HepG2 (cell line): ENCODE measurements at regions of chr7 and their contacts with region 1.

Region 1: DNA sequence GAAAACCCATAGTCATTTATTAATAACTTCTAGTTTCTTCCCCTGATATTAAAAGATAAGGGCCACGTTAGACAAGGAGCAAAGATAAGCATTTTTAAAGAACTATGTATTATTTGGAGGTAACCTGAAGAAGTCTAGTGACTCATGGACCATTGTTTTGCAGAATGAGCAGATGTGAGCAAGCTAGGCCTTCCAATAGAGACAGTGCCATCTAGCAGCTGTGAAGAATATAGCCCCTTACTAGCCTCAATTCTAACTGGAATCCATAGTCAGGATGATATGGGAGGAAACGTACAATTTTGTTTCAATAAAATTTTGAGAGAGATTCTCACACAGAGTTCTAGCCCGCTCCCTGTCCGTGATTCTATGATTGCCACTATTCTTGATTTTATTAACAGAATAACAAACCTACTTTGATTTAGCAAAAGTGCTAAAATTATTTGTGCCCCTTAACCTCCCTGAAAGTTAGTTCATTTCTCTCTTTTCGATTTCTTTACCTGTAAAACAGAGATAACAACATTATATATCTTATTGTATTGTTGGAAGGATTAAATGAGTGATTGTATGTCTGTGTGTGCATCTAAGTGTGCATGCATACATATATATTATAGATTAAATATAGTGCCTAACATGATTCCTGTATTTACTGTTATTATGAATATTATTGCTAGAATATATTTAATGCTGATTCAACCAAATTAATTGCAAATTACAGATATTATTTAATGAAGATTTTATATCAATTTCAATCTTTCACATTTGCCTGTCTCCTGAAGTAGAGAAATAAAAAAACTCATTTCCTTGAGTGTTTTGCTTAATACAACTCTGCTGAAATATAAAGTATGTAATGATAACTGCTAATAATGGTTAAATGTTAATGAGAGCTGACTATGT is 22.7 kb downstream of the FAM237B start:
- DNase-seq: peak; percentile 54
- ATAC-seq: peak; percentile 99
- H3K4me3 ChIP-seq: no peak overlapping the region
- H3K27ac ChIP-seq: no peak overlapping the region
- H3K4me1 ChIP-seq: no peaks in the 10 kb centered on the region
- H3K27me3 ChIP-seq: no peaks in the 10 kb centered on the region
- CTCF ChIP-seq: peak; percentile 83
- EP300 ChIP-seq: no peak
- POLR2A ChIP-seq: no peak
- RAD21 ChIP-seq: peak; percentile 48; the same call in 1 of the 2 replicates

Region 2: DNA sequence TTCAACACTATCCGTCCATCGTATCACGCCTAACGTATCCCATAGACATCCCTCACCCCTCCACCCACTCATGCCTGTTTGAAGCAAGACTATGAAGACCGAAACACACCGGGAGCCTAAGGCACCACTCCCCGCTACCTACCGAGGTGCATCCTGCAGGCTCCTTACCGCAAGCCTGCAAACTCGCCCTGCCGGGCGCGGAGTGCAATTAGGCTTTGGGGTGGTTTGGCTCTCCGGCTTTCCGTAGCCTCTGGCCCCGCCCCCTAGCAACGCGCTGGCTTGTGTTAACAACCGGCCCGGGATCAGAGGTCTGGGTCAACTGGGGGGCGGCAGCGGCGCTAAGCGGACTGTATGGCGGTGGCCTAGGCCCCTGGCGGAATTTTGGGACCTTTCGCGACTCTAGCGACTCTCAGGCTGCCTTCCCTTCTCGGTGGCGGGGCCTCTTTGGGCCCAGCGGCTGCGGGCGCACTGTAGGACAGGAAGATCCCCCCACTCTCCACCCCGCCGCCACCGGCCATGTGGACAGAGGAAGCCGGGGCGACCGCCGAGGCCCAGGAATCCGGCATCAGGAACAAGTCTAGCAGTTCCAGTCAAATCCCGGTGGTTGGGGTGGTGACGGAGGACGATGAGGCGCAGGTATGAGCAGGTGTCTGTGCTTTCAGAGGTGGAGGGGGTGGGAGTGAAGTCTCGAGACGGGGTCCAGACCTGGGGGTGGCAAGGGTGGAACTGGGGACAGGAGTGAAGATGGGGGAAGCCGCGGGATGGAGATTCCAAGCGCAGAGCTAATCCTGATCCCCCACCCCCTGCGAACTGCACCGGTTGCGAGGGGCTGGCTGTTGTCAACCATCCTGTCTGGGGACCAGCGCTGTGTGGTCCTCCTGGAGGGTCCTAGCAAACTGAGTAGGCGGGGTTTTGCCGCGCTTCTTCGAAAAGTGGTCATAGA is 53.2 kb before region 1 on chr7 and contains the start of gene CFAP69:
- CTCF ChIA-PET with region 1: no interaction called
- POLR2A ChIA-PET with region 1: no interaction called
- in situ Hi-C with region 1: no loop called
- intact Hi-C with region 1: loop called (anchors 5 kb)
- DNase-seq: peak; percentile 78
- ATAC-seq: peak; percentile 90
- H3K4me3 ChIP-seq: peak within 1 kb of the TSS; percentile 61 to 91 (median 76)
- H3K27ac ChIP-seq: peak within 1 kb of the TSS; percentile 51
- H3K4me1 ChIP-seq: peaks cover 29% of the 10 kb centered on the region
- H3K27me3 ChIP-seq: no peaks in the 10 kb centered on the region
- CTCF ChIP-seq: peak; percentile 53; the same call in 1 of the 2 replicates
- EP300 ChIP-seq: peak; percentile 20 to 38; a peak in 2 of 4 replicates
- POLR2A ChIP-seq: peak; percentile 33 to 82; a peak in 2 of 4 replicates
- RAD21 ChIP-seq: peak; percentile 39; the same call in 1 of the 2 replicates
- total RNA-seq, gene CFAP69: 2.7 and 4.0 TPM in 2 replicates

Region 3: GRCh38 chr7:90262438-90262837 is 36.0 kb before region 1 on chr7:
- CTCF ChIA-PET with region 1: no interaction called
- POLR2A ChIA-PET with region 1: no interaction called
- in situ Hi-C with region 1: no loop called
- intact Hi-C with region 1: loop called (anchors 1 kb)
- DNase-seq: no peak
- ATAC-seq: peak; percentile 74
- H3K4me3 ChIP-seq: no peak overlapping the region
- H3K27ac ChIP-seq: no peak overlapping the region
- H3K4me1 ChIP-seq: peaks cover 16% of the 10 kb centered on the region
- H3K27me3 ChIP-seq: no peaks in the 10 kb centered on the region
- CTCF ChIP-seq: peak; percentile 51
- EP300 ChIP-seq: no peak
- POLR2A ChIP-seq: no peak
- RAD21 ChIP-seq: no peak

Region 4: DNA sequence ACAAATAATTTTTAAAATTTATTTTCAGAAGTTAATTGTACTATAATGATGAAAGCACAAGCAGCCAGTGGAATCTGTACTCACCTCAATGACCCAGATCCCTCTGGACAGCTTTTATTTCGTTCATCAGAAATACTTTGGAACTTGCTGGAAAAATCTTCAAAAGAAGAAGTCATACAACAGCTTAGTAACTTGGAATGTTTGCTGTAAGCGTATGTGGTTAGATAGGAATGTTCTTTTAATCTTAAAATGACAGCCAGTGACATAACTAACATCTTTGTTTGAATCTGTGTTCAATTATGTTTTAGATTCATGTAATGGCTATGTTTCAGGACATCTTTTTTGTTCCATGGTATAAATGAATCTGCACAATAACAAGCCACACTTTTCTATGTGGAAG is 26.6 kb before region 1 on chr7:
- CTCF ChIA-PET with region 1: no interaction called
- POLR2A ChIA-PET with region 1: no interaction called
- in situ Hi-C with region 1: no loop called
- intact Hi-C with region 1: loop called (anchors 2 kb)
- DNase-seq: peak; percentile 59
- ATAC-seq: no peak
- H3K4me3 ChIP-seq: no peak overlapping the region
- H3K27ac ChIP-seq: peak overlapping the region; percentile 39
- H3K4me1 ChIP-seq: peaks cover 73% of the 10 kb centered on the region
- H3K27me3 ChIP-seq: no peaks in the 10 kb centered on the region
- CTCF ChIP-seq: no peak
- EP300 ChIP-seq: no peak
- POLR2A ChIP-seq: no peak
- RAD21 ChIP-seq: no peak

Region 5: DNA sequence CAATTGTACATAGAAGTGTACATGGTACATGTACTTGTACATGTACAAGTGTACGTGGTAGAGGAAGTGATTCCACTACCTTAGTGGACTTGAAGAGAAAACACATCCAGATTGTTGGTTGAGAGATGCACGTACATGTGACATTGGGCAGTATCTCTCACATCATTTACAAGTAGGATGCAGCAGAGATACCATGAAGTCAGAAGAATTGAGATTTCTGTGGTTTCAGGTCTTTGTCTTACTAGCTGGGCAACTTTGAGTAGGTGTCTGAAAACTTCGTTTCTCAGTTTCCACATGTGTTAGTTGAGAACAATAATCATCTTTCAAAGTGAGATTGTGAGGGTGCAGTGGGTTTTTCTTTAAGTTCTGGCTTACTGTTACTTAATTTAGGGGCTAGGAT is 126.3 kb after region 1 on chr7:
- CTCF ChIA-PET with region 1: interaction called, 5 read pairs
- POLR2A ChIA-PET with region 1: no interaction called
- in situ Hi-C with region 1: no loop called
- intact Hi-C with region 1: loop called (anchors 5 kb)
- DNase-seq: no peak
- ATAC-seq: no peak
- H3K4me3 ChIP-seq: no peak overlapping the region
- H3K27ac ChIP-seq: no peak overlapping the region
- H3K4me1 ChIP-seq: no peaks in the 10 kb centered on the region
- H3K27me3 ChIP-seq: no peaks in the 10 kb centered on the region
- CTCF ChIP-seq: no peak
- EP300 ChIP-seq: no peak
- POLR2A ChIP-seq: no peak
- RAD21 ChIP-seq: no peak